ENCODE measurements at regions of chr12 and their contacts with region 1.

Region 1: DNA sequence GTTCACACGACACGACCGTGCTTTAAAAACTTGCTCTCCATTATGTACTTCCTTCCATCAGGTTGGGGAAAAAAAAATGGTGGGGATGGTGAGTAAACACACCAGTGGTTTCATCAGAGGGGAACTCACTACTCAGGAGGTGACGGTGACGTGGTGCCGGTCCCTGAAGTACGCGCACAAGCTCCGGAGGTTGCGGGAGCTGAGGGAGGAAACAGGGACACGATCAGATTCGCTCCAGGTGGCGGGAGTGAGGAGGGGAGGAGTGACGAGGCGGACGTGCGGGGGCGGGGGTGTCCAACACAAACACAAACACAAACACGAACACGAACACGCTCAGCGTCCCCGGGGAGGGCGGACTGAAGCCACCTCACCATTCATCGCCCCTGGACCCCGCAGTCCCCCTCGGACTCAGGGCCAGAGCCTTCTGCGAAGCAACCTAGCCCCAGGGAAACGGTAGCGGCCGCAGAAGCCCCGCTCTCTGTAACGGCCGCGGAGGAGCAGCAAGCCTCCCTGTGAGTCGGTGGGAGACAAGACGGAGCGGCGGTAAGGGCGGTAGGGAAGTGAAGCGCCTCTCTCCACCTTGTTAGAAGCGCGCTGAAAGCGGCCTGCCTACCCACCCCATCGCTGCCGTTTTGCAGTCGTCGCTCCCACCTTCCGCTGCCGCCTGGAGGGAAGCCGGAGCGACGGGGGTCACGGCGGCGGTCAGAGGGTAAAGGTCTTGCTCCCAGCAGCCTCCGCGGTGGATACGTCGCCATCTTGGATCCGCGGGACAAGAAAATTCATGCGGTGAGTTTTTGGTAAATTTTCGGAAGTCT is at the start of gene CNOT2:
- DNase-seq: peak; percentile 94
- H3K4me3 Mint-ChIP-seq: peak within 1 kb of the TSS; percentile 99
- H3K27ac Mint-ChIP-seq: peak within 1 kb of the TSS; percentile 100
- H3K4me1 Mint-ChIP-seq: peaks cover 48% of the 10 kb centered on the region
- H3K27me3 Mint-ChIP-seq: no peaks in the 10 kb centered on the region
- total RNA-seq, gene CNOT2: 66.0 to 66.2 TPM

Region 2: GRCh38 chr12:69470189-69471075 is 772.5 kb before region 1 on chr12 and contains the start of gene FRS2:
- CTCF ChIA-PET with region 1: no interaction called
- intact Hi-C with region 1: loop called (anchors 5 kb)
- DNase-seq: peak; percentile 93
- H3K4me3 Mint-ChIP-seq: peak within 1 kb of the TSS; percentile 98
- H3K27ac Mint-ChIP-seq: peak within 1 kb of the TSS; percentile 96
- H3K4me1 Mint-ChIP-seq: peaks cover 42% of the 10 kb centered on the region
- H3K27me3 Mint-ChIP-seq: no peaks in the 10 kb centered on the region
- total RNA-seq, gene FRS2: 7.9 TPM

Region 3: DNA sequence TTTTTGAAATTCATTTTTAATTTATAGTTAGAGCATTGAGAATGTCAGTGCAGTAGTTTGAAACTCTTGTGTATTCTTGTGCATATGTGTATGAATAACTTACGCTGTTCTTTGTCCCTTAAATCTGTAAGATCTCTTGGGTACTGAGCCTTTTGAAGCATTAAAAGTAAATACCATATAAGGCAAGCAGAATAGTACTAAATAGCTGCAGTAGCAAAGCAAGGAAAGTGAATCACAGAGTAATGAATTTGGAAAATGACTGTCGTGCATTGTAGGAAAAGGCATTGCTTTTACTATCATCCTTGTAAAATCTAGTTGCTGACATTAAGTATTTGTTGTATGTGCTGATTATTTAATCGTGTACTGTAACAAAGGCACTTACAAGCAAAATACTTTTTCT is 12.4 kb after region 1 on chr12:
- CTCF ChIA-PET with region 1: no interaction called
- intact Hi-C with region 1: loop called (anchors 1 kb)
- DNase-seq: no peak
- H3K4me3 Mint-ChIP-seq: no peak overlapping the region
- H3K27ac Mint-ChIP-seq: no peak overlapping the region
- H3K4me1 Mint-ChIP-seq: peaks cover 67% of the 10 kb centered on the region
- H3K27me3 Mint-ChIP-seq: no peaks in the 10 kb centered on the region

Region 4: GRCh38 chr12:70365648-70366518 is 123.0 kb after region 1 on chr12 and contains the start of gene KCNMB4:
- CTCF ChIA-PET with region 1: no interaction called
- intact Hi-C with region 1: loop called (anchors 1 kb)
- DNase-seq: peak; percentile 75
- H3K4me3 Mint-ChIP-seq: peak within 1 kb of the TSS; percentile 90
- H3K27ac Mint-ChIP-seq: no peak within 1 kb of the TSS
- H3K4me1 Mint-ChIP-seq: peaks cover 18% of the 10 kb centered on the region
- H3K27me3 Mint-ChIP-seq: peaks cover 10% of the 10 kb centered on the region
- total RNA-seq, gene KCNMB4: 0.54 to 0.60 TPM

Region 5: DNA sequence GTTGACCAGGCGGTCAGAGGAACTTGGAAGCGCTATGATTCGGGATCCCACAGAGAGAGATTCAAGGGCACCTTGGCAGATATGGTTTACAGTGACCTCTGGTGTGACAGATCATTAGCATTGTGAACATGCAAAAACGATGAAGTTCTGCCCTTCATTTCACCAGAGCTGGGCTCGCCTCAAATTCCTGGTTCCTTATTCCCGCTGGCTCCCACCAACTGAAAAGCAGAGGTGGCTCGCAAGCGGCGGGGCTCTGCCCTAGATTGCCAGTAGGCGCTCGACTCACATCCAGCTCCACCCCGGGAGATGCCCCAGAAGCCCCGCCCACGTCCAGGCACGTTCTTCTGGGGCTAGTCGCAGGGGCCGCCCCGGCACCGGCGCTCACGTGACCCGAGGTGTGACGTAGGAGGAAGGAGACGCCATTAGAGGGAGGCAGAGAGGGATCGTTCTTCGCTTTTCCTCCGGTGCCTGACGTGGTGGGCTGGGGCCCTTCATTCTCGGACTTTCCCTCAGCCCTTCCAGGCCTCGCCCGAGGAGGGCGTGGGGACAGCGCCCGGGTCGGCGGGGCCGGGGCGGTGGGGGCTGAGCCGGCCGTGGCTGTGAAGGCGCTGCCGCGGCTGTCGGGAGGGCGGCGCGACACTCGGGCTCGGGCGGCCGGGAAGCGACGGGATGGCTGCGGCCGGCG is 1511.7 kb after region 1 on chr12 and contains the start of gene RAB21:
- CTCF ChIA-PET with region 1: no interaction called
- intact Hi-C with region 1: loop called (anchors 1 kb)
- DNase-seq: peak; percentile 99
- H3K4me3 Mint-ChIP-seq: peak within 1 kb of the TSS; percentile 89
- H3K27ac Mint-ChIP-seq: peak within 1 kb of the TSS; percentile 96
- H3K4me1 Mint-ChIP-seq: peaks cover 35% of the 10 kb centered on the region
- H3K27me3 Mint-ChIP-seq: peaks cover 7% of the 10 kb centered on the region
- total RNA-seq, gene RAB21: 76.3 to 80.3 TPM

Measured in activated naive CD4-positive, alpha-beta T cell treated with anti-CD3 and anti-CD28 coated beads for 36 hours (primary cell).